Activated T-helper 1 cell treated with anti-CD3 and anti-CD28 coated beads, Interleukin-12 subunit alpha, Interleukin-12 subunit beta, Interleukin-2, Interleukin-4 antibody, amounts not matched to agents 30 ng/mL and 10 ng/mL and 1 ng/mL, durations not matched to agents 14 hours and 24 hours and 36 hours (primary cell): ENCODE measurements at regions of chr2 and their contacts with region 1.

Region 1: DNA sequence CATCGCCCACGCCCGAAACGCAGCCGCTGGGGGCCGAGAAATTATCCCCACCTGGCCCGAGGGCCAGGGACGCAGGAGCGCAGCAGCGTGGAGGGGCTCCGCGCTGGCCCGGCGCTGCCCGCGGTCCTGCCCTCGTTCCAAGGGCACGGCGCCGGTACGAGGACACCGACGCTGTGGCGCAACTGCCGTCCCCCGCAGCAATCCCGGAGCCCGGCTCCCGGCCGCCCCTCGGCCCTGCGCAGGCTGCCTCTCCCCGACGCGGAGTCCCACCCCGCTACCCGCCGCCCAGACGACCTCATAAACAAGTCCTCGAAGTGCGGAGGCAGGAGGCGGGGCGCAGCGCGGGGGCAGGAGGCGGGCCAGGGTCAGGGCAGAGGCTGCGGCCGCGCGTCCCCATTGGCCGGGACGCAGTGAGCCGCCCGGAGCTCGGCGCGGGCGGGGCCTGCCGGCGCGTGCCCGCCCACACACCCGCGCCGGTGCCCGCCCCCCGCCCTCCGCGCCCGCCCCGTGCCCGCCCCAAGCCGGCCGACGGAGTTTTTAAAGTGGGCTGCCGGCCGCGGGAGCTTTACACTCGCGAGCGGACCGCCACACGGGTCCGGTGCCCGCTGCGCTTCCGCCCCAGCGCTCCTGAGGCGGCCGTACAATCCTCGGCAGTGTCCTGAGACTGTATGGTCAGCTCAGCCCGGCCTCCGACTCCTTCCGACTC is at the start of gene EPAS1:
- DNase-seq: peak; percentile 83
- H3K4me3 Mint-ChIP-seq: peak within 1 kb of the TSS; percentile 87
- H3K27ac Mint-ChIP-seq: peak within 1 kb of the TSS; percentile 79
- H3K4me1 Mint-ChIP-seq: peaks cover 26% of the 10 kb centered on the region
- H3K27me3 Mint-ChIP-seq: peaks cover 64% of the 10 kb centered on the region
- total RNA-seq, gene EPAS1: 13.7 and 22.9 TPM in 2 replicates

Region 2: DNA sequence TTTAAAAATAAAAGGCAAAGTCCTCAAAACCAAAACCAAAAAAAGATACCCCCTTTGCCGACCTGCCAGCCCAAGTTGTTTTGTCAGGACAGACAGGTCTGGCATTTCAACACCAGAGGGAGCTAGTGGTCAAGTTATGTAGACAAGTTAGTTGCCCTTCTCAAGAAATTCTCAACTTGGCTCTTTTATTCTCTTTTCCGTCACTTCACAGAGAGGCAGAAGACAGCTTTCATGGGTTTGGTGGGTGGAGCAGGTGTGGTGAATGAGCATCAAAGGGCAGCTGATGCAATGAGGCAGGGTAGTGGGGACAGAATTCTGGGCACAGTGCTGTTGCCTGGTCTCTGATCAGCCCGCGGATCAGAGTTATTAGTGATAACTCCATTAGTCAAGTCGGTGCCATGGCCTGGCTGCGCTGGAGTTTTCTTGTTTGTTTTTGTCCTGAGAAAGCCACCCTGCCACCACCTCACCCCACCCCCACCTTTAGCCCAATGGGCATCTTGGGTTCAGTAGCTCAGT is 303.5 kb before region 1 on chr2:
- intact Hi-C with region 1: loop called (anchors 5 kb)
- DNase-seq: peak; percentile 44
- H3K4me3 Mint-ChIP-seq: no peak overlapping the region
- H3K27ac Mint-ChIP-seq: no peak overlapping the region
- H3K4me1 Mint-ChIP-seq: peaks cover 5% of the 10 kb centered on the region
- H3K27me3 Mint-ChIP-seq: peaks cover 3% of the 10 kb centered on the region

Region 3: GRCh38 chr2:46062637-46063412 is 234.2 kb before region 1 on chr2:
- intact Hi-C with region 1: loop called (anchors 1 kb)
- DNase-seq: peak; percentile 46
- H3K4me3 Mint-ChIP-seq: no peak overlapping the region
- H3K27ac Mint-ChIP-seq: no peak overlapping the region
- H3K4me1 Mint-ChIP-seq: peaks cover 18% of the 10 kb centered on the region
- H3K27me3 Mint-ChIP-seq: no peaks in the 10 kb centered on the region

Region 4: DNA sequence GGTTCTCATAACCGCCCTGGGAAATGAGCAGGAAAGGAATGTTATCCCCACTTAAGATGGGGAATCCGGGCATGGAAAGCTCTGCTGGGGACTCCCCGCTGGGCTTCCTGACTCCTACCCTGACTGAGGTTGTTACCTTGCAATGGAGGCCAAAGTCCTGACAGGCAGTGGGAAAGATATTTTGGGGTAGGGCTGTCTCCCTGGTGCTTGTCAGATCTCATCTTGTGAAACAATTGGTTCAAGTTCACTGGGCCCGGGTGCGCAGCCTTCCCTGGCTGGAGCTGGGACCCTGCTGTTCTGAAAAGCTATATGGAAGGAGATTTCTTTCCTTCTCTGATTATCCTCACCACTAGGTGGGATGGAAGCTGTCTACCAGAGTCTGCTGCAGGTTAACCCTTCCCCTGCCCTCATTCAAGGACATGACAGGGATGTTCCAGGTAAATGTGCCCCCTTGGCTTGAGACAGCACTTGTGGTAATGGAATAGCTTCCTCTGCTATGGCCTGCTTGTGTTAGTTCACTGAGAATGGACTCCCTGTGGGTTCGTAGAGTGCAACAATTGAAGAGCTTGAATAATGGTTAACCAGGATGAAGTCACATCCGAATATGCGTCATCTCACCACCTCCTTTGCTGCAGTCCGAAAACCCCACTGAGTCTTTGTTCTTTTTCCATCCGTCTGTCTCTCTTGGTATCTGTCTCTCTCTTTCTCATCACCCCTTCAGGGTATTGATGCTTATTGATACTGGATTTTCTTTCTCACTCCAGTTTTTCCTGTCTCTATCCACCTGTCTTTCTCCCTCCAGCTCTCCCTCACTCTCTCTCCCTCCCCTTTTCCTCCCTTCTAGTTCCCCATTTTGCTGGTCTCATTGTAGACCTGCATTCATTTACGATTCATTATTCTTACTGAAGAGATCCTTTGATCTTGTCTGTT is 67.6 kb before region 1 on chr2:
- intact Hi-C with region 1: loop called (anchors 2 kb)
- DNase-seq: peak; percentile 38
- H3K4me3 Mint-ChIP-seq: peak overlapping the region; percentile 53
- H3K27ac Mint-ChIP-seq: peak overlapping the region; percentile 90
- H3K4me1 Mint-ChIP-seq: peaks cover 56% of the 10 kb centered on the region
- H3K27me3 Mint-ChIP-seq: peaks cover 9% of the 10 kb centered on the region

Region 5: DNA sequence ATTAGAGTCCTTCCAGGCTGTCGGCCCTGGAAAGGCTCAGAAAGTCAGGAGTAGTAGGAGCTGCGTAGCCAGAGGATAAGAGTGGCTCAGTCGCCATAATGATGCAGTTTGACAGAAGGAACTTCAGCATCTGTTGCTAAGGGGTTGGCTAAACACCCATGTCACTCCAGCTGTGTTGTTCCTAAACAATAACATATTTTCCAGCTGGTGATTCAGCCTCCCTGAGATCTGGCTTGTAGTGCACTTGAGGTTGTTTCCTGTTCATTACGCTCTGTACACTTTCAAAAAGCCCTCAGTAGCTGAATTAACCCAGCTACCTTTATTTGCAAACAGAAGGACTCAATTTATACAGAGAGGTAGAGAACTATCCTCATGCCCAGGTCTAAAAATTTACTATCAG is 39.5 kb before region 1 on chr2:
- intact Hi-C with region 1: no loop called
- DNase-seq: no peak
- H3K4me3 Mint-ChIP-seq: no peak overlapping the region
- H3K27ac Mint-ChIP-seq: no peak overlapping the region
- H3K4me1 Mint-ChIP-seq: no peaks in the 10 kb centered on the region
- H3K27me3 Mint-ChIP-seq: peaks cover 6% of the 10 kb centered on the region

Region 6: DNA sequence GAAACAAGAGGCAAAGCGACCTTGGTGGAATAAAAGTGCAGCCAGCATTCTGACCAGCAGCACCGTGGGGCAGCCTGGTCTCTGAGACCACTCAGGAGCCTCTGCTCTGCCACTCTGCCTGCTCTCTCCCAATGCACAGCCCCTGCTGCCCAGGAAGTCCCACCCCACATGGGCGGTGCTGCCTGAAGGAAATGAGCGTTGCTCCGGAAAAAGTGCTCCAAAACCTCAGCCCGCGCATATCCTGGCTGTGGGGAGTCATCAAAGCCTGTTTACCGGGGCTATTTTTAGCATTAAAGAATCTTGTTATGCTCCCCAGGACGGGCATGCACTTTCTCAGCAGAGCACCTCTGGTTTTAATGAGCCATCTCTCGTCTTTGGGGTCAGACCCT is 54.8 kb after region 1 on chr2:
- intact Hi-C with region 1: loop called (anchors 2 kb)
- DNase-seq: peak; percentile 69
- H3K4me3 Mint-ChIP-seq: peak overlapping the region; percentile 80
- H3K27ac Mint-ChIP-seq: peak overlapping the region; percentile 95
- H3K4me1 Mint-ChIP-seq: peaks cover 84% of the 10 kb centered on the region
- H3K27me3 Mint-ChIP-seq: no peaks in the 10 kb centered on the region

Region 7: DNA sequence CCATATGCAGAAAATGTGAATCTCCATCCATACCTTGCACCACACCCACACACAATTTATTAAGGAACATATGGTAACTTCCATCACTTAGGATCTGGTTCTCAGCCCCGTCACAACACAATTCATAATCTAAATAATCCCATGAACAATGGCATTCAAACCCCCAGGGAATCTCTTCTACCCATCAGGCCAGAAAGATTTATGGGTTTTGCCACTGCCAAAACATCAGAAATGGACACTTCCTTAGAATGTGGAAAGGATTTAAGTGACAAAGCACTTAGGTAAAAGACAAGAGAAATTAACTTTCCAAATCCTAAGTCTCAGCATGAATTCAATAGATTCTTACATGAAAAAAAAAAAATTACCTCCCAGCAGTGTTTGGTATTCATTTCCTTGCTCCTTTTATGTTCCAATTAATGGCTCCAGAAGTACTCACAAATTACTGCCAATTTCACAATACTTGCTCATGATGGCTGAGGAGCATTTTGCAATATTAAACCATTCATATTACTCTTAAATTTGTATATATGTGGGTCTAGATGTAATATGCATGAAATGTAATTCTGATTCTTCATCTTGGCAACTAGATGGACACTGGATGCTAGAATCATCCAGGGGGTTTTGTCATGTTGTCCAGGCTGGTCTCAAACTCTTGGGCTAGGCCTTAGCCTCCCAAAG is 125.9 kb after region 1 on chr2:
- intact Hi-C with region 1: no loop called
- DNase-seq: no peak
- H3K4me3 Mint-ChIP-seq: no peak overlapping the region
- H3K27ac Mint-ChIP-seq: no peak overlapping the region
- H3K4me1 Mint-ChIP-seq: no peaks in the 10 kb centered on the region
- H3K27me3 Mint-ChIP-seq: peaks cover 4% of the 10 kb centered on the region

Region 8: GRCh38 chr2:47402805-47403608 is 1106.0 kb after region 1 on chr2 and contains the start of gene MSH2:
- intact Hi-C with region 1: loop called (anchors 5 kb)
- DNase-seq: peak; percentile 91
- H3K4me3 Mint-ChIP-seq: peak within 1 kb of the TSS; percentile 97
- H3K27ac Mint-ChIP-seq: peak within 1 kb of the TSS; percentile 96
- H3K4me1 Mint-ChIP-seq: peaks cover 28% of the 10 kb centered on the region
- H3K27me3 Mint-ChIP-seq: no peaks in the 10 kb centered on the region
- total RNA-seq, gene MSH2: 73.3 TPM in 2 replicates